Sigmoid colon (tissue), 7 donors: ENCODE measurements at regions of chr4 and their contacts with region 1.

Region 1: DNA sequence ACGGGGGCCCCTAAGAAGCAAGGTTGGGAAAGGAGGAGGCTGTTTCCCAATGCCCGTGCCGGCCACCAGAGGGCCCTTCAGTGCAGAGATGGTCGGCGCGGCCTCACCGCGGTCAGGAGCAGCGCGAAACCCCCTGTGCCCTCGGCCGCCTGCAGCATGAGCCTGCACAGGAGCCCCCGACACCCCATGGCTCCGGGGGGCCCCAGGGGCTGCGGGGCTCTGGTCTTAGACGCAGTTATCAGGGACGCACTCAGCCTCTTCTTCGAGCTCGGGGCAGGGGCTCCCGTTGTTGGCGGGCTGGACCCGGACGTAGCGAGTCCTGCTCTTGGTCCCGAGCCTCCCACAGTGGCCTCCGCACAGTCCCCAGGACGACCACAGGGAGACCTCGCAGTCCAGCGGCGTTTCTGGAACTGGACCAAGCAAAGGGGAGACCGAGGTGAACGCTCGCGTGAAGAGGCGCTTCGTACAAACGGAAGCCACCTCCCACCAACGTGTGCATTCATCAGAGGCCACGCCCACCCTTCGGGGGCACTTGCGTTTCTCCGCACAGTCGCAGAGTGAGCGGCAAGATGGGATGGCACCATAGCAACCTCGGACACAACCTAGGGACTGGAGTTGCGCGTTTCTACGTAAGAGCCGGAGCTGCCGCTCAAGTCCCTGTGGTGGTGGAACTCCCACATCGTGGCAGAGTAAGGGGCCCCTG is 5.0 kb downstream of the SPON2 start:
- DNase-seq: peak; percentile 92
- H3K4me3 ChIP-seq: peak overlapping the region; percentile 39 to 66 (median 59)
- H3K27ac ChIP-seq: peak overlapping the region; percentile 45 to 71 (median 66)
- H3K4me1 ChIP-seq: peaks cover 2 to 50% (median 35%) of the 10 kb centered on the region in 4 donors
- H3K27me3 ChIP-seq: peaks cover 20 to 27% (median 25%) of the 10 kb centered on the region in 3 donors
- CTCF ChIP-seq: peak; percentile 87 to 94 (median 92)
- EP300 ChIP-seq: no peak
- POLR2A ChIP-seq: no peak

Region 2: GRCh38 chr4:650951-651883 is 516.2 kb before region 1 on chr4:
- intact Hi-C with region 1: no loop called
- DNase-seq: no peak
- H3K4me3 ChIP-seq: no peak overlapping the region
- H3K27ac ChIP-seq: no peak overlapping the region
- H3K4me1 ChIP-seq: no peaks in the 10 kb centered on the region
- H3K27me3 ChIP-seq: peaks cover 0 to 59% (median 30%) of the 10 kb centered on the region in 3 donors
- CTCF ChIP-seq: no peak
- EP300 ChIP-seq: no peak
- POLR2A ChIP-seq: no peak

Region 3: GRCh38 chr4:1130316-1131186 is 36.8 kb before region 1 on chr4:
- intact Hi-C with region 1: loop called (anchors 5 kb)
- DNase-seq: peak; percentile 82
- H3K4me3 ChIP-seq: no peak overlapping the region
- H3K27ac ChIP-seq: no peak overlapping the region
- H3K4me1 ChIP-seq: peaks cover 0 to 10% (median 3%) of the 10 kb centered on the region in 4 donors
- H3K27me3 ChIP-seq: no peaks in the 10 kb centered on the region
- CTCF ChIP-seq: peak; percentile 96 to 99 (median 97)
- EP300 ChIP-seq: no peak
- POLR2A ChIP-seq: no peak

Region 4: GRCh38 chr4:1200425-1201035 is 33.1 kb after region 1 on chr4:
- intact Hi-C with region 1: loop called (anchors 5 kb)
- DNase-seq: peak; percentile 96
- H3K4me3 ChIP-seq: peak overlapping the region; percentile 11 to 40 (median 31)
- H3K27ac ChIP-seq: peak overlapping the region; percentile 69 to 85 (median 74)
- H3K4me1 ChIP-seq: peaks cover 0 to 38% (median 35%) of the 10 kb centered on the region in 4 donors
- H3K27me3 ChIP-seq: no peaks in the 10 kb centered on the region
- CTCF ChIP-seq: no peak
- EP300 ChIP-seq: no peak
- POLR2A ChIP-seq: no peak

Region 5: GRCh38 chr4:1249148-1249730 is 81.8 kb after region 1 on chr4:
- intact Hi-C with region 1: loop called (anchors 1 kb)
- DNase-seq: peak; percentile 93
- H3K4me3 ChIP-seq: peak overlapping the region; percentile 42 to 98 (median 74)
- H3K27ac ChIP-seq: peak overlapping the region; percentile 88 to 99 (median 94)
- H3K4me1 ChIP-seq: peaks cover 0 to 55% (median 52%) of the 10 kb centered on the region in 4 donors
- H3K27me3 ChIP-seq: no peaks in the 10 kb centered on the region
- CTCF ChIP-seq: no peak
- EP300 ChIP-seq: no peak
- POLR2A ChIP-seq: no peak

Region 6: GRCh38 chr4:1266881-1267763 is 99.7 kb after region 1 on chr4:
- intact Hi-C with region 1: loop called (anchors 1 kb)
- DNase-seq: no peak
- H3K4me3 ChIP-seq: no peak overlapping the region
- H3K27ac ChIP-seq: no peak overlapping the region
- H3K4me1 ChIP-seq: no peaks in the 10 kb centered on the region
- H3K27me3 ChIP-seq: no peaks in the 10 kb centered on the region
- CTCF ChIP-seq: no peak
- EP300 ChIP-seq: no peak
- POLR2A ChIP-seq: no peak

Region 7: GRCh38 chr4:1489651-1490348 is 322.4 kb after region 1 on chr4:
- intact Hi-C with region 1: no loop called
- DNase-seq: peak; percentile 42
- H3K4me3 ChIP-seq: no peak overlapping the region
- H3K27ac ChIP-seq: no peak overlapping the region
- H3K4me1 ChIP-seq: no peaks in the 10 kb centered on the region
- H3K27me3 ChIP-seq: peaks cover 8 to 78% (median 37%) of the 10 kb centered on the region in 3 donors
- CTCF ChIP-seq: no peak
- EP300 ChIP-seq: no peak
- POLR2A ChIP-seq: no peak